Activated B cell treated with CpG ODN at 0.5 μM for 24 hours (primary cell): ENCODE measurements at regions of chr3 and their contacts with region 1.

Region 1: GRCh38 chr3:56753206-56753820 is 48.4 kb downstream of the ARHGEF3 start:
- DNase-seq: no peak
- ATAC-seq: peak; percentile 64
- H3K4me3 Mint-ChIP-seq: peak overlapping the region; percentile 52
- H3K27ac Mint-ChIP-seq: peak overlapping the region; percentile 97
- H3K4me1 Mint-ChIP-seq: peaks cover 62% of the 10 kb centered on the region
- H3K27me3 Mint-ChIP-seq: no peaks in the 10 kb centered on the region
- CTCF ChIP-seq: no peak

Region 2: DNA sequence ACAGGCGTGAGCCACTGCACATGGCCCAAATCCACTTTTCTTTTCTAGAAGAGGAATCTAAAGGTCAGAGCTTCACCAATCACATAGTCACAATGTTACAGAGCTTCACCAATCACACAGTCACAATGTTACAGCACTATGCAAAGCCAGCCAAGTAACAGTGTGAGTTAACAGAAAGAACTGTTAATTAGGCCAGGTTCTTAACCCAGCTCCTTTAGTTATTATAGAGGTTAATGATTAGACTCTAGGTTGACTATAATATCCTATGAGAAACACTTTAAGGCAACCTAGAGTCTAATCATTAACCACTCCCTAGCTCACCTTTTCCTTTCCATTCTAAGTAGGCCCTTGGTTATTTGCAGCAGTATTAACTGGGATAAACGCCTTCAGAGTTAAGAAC is 124.3 kb before region 1 on chr3:
- CTCF ChIA-PET with region 1: no interaction called
- POLR2A ChIA-PET with region 1: no interaction called
- intact Hi-C with region 1: no loop called
- DNase-seq: no peak
- ATAC-seq: no peak
- H3K4me3 Mint-ChIP-seq: no peak overlapping the region
- H3K27ac Mint-ChIP-seq: no peak overlapping the region
- H3K4me1 Mint-ChIP-seq: no peaks in the 10 kb centered on the region
- H3K27me3 Mint-ChIP-seq: no peaks in the 10 kb centered on the region
- CTCF ChIP-seq: no peak

Region 3: DNA sequence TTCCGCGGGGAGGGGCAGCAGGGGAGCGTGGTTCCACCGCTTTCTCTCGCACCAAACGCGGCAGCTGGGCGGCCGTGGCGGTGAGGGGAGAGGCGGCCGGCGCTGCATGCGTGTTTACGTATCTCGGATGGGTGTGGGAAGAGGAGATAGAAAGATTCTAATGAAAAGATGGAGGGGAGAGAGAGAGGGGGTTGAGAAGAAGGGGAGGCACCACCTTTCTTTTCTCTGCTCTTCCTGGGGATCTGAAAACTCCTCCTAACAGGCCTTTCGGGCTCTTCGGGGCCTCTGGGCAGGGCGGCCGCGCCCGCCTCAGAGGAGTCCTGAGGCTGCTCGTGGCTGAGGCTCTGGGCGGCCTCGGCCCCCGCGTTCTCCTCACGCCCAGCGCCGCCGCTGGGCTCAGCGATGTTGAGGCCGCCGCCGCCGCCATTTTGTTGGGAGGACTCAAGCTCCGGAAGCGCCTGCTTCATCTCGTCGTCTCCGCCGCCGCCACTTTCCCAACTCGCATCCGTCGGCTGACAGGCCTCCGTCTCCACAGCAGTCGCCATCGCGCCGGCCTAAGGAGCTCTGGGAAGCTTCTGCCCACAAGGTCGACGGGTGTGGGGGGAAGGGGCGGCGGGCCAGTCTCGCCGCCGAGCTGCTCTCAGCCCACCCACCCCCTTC is 70.7 kb before region 1 on chr3:
- CTCF ChIA-PET with region 1: no interaction called
- POLR2A ChIA-PET with region 1: interaction called, 19 read pairs
- intact Hi-C with region 1: no loop called
- DNase-seq: peak; percentile 76
- ATAC-seq: peak; percentile 73
- H3K4me3 Mint-ChIP-seq: peak overlapping the region; percentile 97
- H3K27ac Mint-ChIP-seq: peak overlapping the region; percentile 97
- H3K4me1 Mint-ChIP-seq: peaks cover 49% of the 10 kb centered on the region
- H3K27me3 Mint-ChIP-seq: no peaks in the 10 kb centered on the region
- CTCF ChIP-seq: no peak

Region 4: DNA sequence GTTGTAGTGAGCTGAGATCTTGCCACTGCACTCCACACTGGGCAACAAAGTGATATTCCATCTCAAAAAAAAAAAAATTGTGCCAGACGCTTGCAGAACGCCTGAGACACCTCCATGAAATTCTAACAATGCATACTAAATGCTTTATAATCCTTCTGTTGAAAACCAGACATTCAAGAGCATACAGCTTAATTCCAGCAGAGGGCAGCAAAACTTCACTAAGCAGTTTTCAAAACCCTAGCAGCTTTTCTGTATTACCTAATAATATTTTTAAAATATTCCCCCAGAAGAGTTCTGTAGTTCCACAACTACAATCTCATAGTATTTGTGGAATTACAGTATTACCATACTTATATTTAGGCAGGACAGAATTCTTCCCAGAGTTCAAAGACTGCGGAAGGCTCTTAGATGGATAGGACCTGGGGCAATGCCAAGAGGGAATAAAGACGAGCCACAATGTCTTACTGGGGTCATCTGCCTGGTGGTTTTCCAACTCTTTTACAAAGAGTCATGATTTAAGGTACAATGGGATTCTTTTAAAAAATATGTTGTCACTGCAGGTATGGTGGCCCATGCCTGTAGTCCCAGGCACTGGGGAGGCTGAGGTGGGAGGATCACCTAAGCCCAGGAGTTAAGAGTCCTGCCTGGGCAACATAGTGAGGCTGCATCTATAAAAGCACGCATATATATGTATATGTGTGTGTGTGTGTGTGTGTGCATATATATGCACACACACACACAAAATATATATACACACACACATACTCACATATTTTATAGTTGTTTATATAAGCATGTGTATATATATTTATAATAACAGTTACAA is 50.6 kb before region 1 on chr3:
- CTCF ChIA-PET with region 1: interaction called, 5 read pairs
- POLR2A ChIA-PET with region 1: no interaction called
- intact Hi-C with region 1: loop called (anchors 5 kb)
- DNase-seq: no peak
- ATAC-seq: peak; percentile 71
- H3K4me3 Mint-ChIP-seq: no peak overlapping the region
- H3K27ac Mint-ChIP-seq: no peak overlapping the region
- H3K4me1 Mint-ChIP-seq: peaks cover 12% of the 10 kb centered on the region
- H3K27me3 Mint-ChIP-seq: no peaks in the 10 kb centered on the region
- CTCF ChIP-seq: peak; percentile 53

Region 5: DNA sequence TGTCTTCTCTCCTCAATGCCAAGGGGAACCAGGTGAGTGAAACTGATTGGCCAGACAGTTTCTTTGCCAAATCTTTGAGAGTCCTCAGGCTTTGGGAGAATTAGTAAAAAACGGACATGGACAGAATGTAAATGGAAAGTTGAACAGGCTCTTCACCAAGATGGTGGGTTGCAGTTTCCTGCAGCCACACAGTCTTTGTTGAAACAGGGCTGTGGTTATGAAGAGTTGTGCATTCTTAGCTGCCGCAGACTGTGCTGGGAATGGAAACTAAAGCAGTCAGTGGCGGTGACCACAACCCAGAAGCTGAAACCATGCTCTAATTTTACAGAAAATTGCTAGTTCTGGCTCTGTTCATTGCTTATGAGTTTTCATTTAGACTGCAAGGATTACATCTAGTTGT is 28.1 kb before region 1 on chr3:
- CTCF ChIA-PET with region 1: no interaction called
- POLR2A ChIA-PET with region 1: interaction called, 11 read pairs
- intact Hi-C with region 1: loop called (anchors 2 kb)
- DNase-seq: no peak
- ATAC-seq: peak; percentile 56
- H3K4me3 Mint-ChIP-seq: no peak overlapping the region
- H3K27ac Mint-ChIP-seq: peak overlapping the region; percentile 21
- H3K4me1 Mint-ChIP-seq: peaks cover 23% of the 10 kb centered on the region
- H3K27me3 Mint-ChIP-seq: no peaks in the 10 kb centered on the region
- CTCF ChIP-seq: no peak

Region 6: GRCh38 chr3:56783644-56784447 is 30.5 kb after region 1 on chr3:
- CTCF ChIA-PET with region 1: interaction called, 6 read pairs
- POLR2A ChIA-PET with region 1: interaction called, 53 read pairs
- intact Hi-C with region 1: loop called (anchors 1 kb)
- DNase-seq: peak; percentile 40
- ATAC-seq: peak; percentile 99
- H3K4me3 Mint-ChIP-seq: peak overlapping the region; percentile 32
- H3K27ac Mint-ChIP-seq: peak overlapping the region; percentile 92
- H3K4me1 Mint-ChIP-seq: peaks cover 88% of the 10 kb centered on the region
- H3K27me3 Mint-ChIP-seq: no peaks in the 10 kb centered on the region
- CTCF ChIP-seq: no peak

Region 7: DNA sequence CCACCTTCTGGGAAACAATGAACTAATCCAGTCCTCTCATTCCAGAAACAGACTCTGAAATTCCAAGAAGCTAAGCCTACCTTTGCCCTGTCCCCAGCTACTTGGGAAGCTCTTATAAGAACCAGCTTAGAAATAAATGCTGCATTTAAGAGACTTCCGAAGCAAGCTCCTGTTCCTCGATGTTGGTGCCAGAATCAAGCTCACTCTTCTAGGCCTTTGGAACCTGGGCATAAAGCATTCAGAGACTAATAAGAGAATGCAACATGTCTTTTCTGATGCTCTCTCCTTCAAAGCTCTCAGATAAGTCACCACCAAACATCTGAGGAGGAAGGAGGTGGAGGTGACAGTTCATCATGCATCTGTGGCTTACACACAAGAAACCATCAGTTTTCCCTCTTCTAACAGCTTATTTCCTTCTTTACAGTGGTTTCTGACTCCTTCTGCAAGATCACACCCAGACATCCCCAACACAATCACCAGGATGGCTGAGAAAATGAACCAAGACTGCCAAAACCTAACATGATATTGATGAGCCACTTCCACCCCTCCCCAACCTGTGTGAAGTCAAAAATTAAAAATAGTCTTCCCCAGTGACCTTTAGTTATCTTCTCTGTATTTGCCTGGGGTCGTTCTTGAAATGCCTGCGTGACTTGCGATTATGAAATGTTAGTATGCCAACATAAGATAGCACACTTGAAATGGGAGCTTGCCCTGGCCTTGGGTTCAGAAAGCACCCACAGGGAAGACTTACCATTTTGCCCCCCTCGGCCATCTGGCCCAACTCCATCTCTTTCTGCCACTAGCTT is 36.9 kb after region 1 on chr3:
- CTCF ChIA-PET with region 1: interaction called, 6 read pairs
- POLR2A ChIA-PET with region 1: interaction called, 181 read pairs
- intact Hi-C with region 1: no loop called
- DNase-seq: no peak
- ATAC-seq: peak; percentile 21
- H3K4me3 Mint-ChIP-seq: peak overlapping the region; percentile 3
- H3K27ac Mint-ChIP-seq: peak overlapping the region; percentile 74
- H3K4me1 Mint-ChIP-seq: peaks cover 65% of the 10 kb centered on the region
- H3K27me3 Mint-ChIP-seq: no peaks in the 10 kb centered on the region
- CTCF ChIP-seq: no peak

Region 8: DNA sequence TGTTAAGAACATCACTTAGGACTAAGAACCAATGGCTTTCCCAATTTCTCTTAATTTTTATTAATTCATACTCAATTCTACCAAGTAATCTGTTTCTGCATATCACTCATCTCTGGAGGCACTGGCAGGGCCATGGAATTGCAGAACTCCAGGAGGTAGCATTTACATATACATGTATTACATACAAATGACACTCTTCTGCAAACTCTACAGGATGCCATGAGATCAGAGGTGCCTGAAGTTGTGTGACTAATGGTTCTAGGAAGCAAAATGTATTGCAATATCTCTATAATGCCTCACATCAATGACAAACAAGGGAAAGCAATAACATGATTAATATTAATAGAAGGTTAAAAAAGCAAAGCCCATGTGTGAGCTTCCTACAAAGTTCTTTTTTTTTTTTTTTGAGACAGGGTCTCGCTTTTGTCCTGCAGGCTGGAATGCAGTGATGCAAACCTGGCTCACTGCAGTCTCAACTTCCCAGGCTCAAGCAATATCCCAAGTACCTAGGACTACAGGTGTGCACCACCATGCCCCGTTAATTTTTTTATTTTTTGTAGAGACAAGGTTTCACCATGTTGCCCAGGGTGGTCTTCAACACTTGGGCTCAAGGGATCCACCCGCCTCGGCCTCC is 906.6 kb after region 1 on chr3:
- CTCF ChIA-PET with region 1: no interaction called
- POLR2A ChIA-PET with region 1: no interaction called
- intact Hi-C with region 1: no loop called
- DNase-seq: no peak
- ATAC-seq: no peak
- H3K4me3 Mint-ChIP-seq: no peak overlapping the region
- H3K27ac Mint-ChIP-seq: no peak overlapping the region
- H3K4me1 Mint-ChIP-seq: no peaks in the 10 kb centered on the region
- H3K27me3 Mint-ChIP-seq: no peaks in the 10 kb centered on the region
- CTCF ChIP-seq: no peak

Region 9: GRCh38 chr3:57670543-57670942 is 917.2 kb after region 1 on chr3:
- CTCF ChIA-PET with region 1: no interaction called
- POLR2A ChIA-PET with region 1: no interaction called
- intact Hi-C with region 1: no loop called
- DNase-seq: no peak
- ATAC-seq: no peak
- H3K4me3 Mint-ChIP-seq: no peak overlapping the region
- H3K27ac Mint-ChIP-seq: peak overlapping the region; percentile 89
- H3K4me1 Mint-ChIP-seq: peaks cover 45% of the 10 kb centered on the region
- H3K27me3 Mint-ChIP-seq: no peaks in the 10 kb centered on the region
- CTCF ChIP-seq: no peak

Region 10: DNA sequence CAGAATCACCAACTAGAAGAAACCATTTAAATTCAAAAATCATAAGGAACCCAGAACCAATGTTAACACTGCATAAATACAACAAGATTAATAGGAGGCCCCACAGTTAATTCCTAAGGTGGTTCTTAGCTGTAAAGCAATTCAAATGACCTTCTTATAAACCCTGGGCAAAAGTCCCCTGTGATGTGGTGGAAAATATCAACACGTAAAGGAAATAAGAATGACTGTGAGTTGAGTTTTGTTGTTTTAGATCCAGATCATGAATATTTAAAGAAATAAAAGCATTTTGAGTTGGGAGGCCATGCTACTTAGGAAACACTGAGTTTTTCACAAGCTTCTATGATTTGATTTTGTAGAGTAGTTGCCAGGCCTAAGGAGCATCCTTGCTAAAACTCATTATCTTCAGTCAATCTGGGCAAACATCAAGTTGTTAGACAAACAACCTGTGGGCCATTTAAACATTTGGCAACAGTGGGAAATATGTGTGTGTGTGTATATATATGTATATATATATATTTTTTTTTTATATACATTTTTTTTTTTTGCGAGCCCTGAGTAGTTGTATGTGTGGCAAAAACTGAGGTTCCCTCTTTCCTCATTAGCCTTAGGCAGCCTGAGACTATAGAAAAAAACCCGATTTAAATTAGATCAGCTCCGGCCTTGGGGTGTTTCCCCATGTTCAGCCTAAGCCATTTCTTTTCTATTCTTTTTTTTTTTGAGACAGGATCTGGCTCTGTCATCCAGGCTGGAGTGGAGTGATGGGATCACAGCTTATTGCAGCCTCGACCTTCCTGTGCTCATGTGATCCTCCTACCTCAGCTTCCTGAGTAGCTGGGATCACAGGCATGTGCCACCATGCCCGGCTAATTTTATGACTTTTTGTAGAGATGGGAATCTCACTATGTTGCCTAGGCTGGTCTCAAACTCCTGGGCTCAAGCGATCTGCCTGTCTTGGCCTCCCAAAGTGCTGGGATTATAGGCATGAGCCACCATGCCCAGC is 1571.4 kb after region 1 on chr3:
- CTCF ChIA-PET with region 1: no interaction called
- POLR2A ChIA-PET with region 1: no interaction called
- intact Hi-C with region 1: no loop called
- DNase-seq: no peak
- ATAC-seq: peak; percentile 47
- H3K4me3 Mint-ChIP-seq: peak overlapping the region; percentile 48
- H3K27ac Mint-ChIP-seq: peak overlapping the region; percentile 73
- H3K4me1 Mint-ChIP-seq: peaks cover 38% of the 10 kb centered on the region
- H3K27me3 Mint-ChIP-seq: no peaks in the 10 kb centered on the region
- CTCF ChIP-seq: no peak